ENCODE measurements at regions of chr2 and their contacts with region 1.

Region 1: DNA sequence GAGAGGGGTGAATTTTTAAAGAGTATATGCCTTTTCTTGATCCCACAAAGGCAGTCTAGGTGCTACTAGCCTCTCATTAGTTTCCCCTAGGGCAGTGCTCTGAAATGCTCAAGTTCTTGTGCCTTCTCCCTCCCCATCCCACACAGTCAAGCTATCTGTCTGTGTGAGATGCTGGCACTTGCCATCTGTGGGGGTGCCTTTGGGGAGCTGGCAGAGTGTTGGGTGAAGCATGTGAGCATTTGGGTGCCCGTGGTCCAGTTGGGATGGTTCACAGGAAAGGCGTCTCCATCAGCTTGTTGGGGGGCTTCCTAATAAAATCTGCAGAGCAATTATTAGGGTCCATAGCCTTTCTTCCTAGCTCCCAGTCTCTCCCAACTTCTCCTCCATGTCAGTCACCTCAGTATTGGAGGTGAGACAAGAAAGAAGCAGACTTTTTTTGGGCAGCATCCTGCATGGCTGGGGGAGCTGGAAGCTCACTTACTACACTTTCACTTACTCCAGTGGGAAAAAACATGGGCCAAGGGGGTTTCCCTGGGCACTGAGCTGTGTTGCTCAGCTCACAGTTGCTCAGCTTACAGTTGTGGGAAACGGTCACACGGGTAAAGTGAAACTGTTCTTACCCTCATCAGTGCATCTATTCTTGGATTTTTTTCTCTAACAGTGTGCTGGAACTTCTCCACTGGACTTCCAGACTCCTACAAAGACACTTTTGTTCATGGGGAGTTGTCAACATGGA is 29.3 kb downstream of the COLEC11 start:
- DNase-seq: peak; percentile 46
- ATAC-seq: peak; percentile 89
- H3K4me3 ChIP-seq: no peak overlapping the region; the same call in 1 of the 2 replicates
- H3K27ac ChIP-seq: peak overlapping the region; percentile 51
- H3K4me1 ChIP-seq: peaks cover 8% of the 10 kb centered on the region; the same call in 1 of the 2 replicates
- H3K27me3 ChIP-seq: no peaks in the 10 kb centered on the region
- CTCF ChIP-seq: no peak
- EP300 ChIP-seq: 0 out of 4 replicates have a peak, but pooled peaks have one; percentile 9 to 14
- POLR2A ChIP-seq: no peak
- RAD21 ChIP-seq: no peak

Region 2: GRCh38 chr2:3595985-3596384 is 28.2 kb before region 1 on chr2:
- CTCF ChIA-PET with region 1: no interaction called
- POLR2A ChIA-PET with region 1: interaction called, 5 read pairs
- RAD21 ChIA-PET with region 1: interaction called, 11 read pairs
- SMC1A ChIA-PET with region 1: no interaction called
- in situ Hi-C with region 1: no loop called
- intact Hi-C with region 1: no loop called
- DNase-seq: no peak
- ATAC-seq: peak; percentile 97
- H3K4me3 ChIP-seq: no peak overlapping the region
- H3K27ac ChIP-seq: no peak overlapping the region
- H3K4me1 ChIP-seq: peaks cover 22% of the 10 kb centered on the region
- H3K27me3 ChIP-seq: no peaks in the 10 kb centered on the region
- CTCF ChIP-seq: no peak
- EP300 ChIP-seq: peak in 1 of 2 experiments; percentile 29; a peak in 1 of 4 replicates
- POLR2A ChIP-seq: no peak
- RAD21 ChIP-seq: peak; percentile 8; the same call in 1 of the 2 replicates

Region 3: GRCh38 chr2:3608373-3609278 is 15.6 kb before region 1 on chr2:
- CTCF ChIA-PET with region 1: no interaction called
- POLR2A ChIA-PET with region 1: interaction called, 12 read pairs
- RAD21 ChIA-PET with region 1: interaction called, 6 read pairs
- SMC1A ChIA-PET with region 1: interaction called, 27 read pairs
- in situ Hi-C with region 1: no loop called
- intact Hi-C with region 1: no loop called
- DNase-seq: no peak
- ATAC-seq: peak; percentile 32
- H3K4me3 ChIP-seq: no peak overlapping the region
- H3K27ac ChIP-seq: 0 out of 2 replicates have a peak overlapping the region, but pooled peaks have one; percentile 20
- H3K4me1 ChIP-seq: peaks cover 10% of the 10 kb centered on the region
- H3K27me3 ChIP-seq: no peaks in the 10 kb centered on the region
- CTCF ChIP-seq: no peak
- EP300 ChIP-seq: no peak
- POLR2A ChIP-seq: no peak
- RAD21 ChIP-seq: no peak

Region 4: GRCh38 chr2:4486971-4487370 is 862.7 kb after region 1 on chr2:
- CTCF ChIA-PET with region 1: no interaction called
- POLR2A ChIA-PET with region 1: no interaction called
- RAD21 ChIA-PET with region 1: no interaction called
- SMC1A ChIA-PET with region 1: no interaction called
- in situ Hi-C with region 1: no loop called
- intact Hi-C with region 1: no loop called
- DNase-seq: no peak
- ATAC-seq: no peak
- H3K4me3 ChIP-seq: no peak overlapping the region
- H3K27ac ChIP-seq: no peak overlapping the region
- H3K4me1 ChIP-seq: no peaks in the 10 kb centered on the region
- H3K27me3 ChIP-seq: no peaks in the 10 kb centered on the region
- CTCF ChIP-seq: no peak
- EP300 ChIP-seq: no peak
- POLR2A ChIP-seq: no peak
- RAD21 ChIP-seq: no peak